Activated CD8-positive, alpha-beta T cell treated with anti-CD3 and anti-CD28 coated beads, Interleukin-2, amount 10 ng/mL, durations not matched to agents 7 days and 5 days (primary cell): ENCODE measurements at regions of chr2 and their contacts with region 1.

Region 1: DNA sequence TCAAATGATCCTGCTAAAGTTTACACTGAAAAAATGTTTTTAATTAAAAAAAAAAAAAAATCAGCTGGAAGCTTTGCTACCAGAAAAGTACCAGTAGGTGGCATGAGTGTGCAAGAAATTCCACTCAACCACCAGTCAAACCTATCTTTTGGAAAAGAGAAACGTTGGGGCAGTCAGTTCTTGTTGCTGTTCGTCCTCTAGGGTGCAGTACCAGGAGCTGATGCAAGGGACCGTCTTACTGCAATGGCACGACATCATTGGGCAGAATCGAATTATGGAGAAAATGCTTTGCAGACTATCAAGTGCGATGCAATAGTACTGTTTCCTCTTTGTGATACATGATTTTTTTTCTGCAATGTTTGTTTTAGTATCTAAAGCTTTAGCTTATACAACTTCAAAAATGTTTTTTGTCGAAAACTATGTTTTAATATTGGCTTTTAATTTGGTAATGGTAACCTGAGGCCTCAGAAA is 18.3 kb downstream of the YPEL5 start:
- DNase-seq: peak; percentile 84
- ATAC-seq: peak; percentile 79
- H3K4me3 Mint-ChIP-seq: no peak overlapping the region
- H3K27ac Mint-ChIP-seq: no peak overlapping the region
- H3K4me1 Mint-ChIP-seq: peaks cover 17% of the 10 kb centered on the region
- H3K27me3 Mint-ChIP-seq: peaks cover 3% of the 10 kb centered on the region

Region 2: DNA sequence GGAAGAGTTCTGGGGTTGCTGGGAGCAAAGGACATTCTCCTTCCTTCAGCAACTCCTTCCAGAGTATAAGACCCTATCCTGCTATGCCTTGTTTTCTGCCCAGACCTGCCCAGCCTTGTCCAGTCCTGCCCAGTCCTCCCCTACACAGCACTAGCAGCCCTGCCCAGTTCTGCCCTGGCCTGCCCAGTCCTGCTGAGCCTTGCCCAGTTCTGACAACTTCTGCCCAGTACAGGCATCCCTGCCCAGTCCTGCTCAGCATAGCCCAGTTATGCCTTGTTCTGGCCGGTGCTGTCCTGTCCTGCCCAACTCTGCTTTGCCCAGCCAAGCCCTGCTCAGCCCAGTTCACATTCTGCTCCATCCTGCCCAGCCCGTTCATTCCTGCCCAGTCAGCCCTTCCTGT is 198.8 kb before region 1 on chr2:
- CTCF ChIA-PET with region 1: no interaction called
- POLR2A ChIA-PET with region 1: no interaction called
- DNase-seq: no peak
- ATAC-seq: no peak
- H3K4me3 Mint-ChIP-seq: no peak overlapping the region
- H3K27ac Mint-ChIP-seq: no peak overlapping the region
- H3K4me1 Mint-ChIP-seq: no peaks in the 10 kb centered on the region
- H3K27me3 Mint-ChIP-seq: peaks cover 15% of the 10 kb centered on the region

Region 3: DNA sequence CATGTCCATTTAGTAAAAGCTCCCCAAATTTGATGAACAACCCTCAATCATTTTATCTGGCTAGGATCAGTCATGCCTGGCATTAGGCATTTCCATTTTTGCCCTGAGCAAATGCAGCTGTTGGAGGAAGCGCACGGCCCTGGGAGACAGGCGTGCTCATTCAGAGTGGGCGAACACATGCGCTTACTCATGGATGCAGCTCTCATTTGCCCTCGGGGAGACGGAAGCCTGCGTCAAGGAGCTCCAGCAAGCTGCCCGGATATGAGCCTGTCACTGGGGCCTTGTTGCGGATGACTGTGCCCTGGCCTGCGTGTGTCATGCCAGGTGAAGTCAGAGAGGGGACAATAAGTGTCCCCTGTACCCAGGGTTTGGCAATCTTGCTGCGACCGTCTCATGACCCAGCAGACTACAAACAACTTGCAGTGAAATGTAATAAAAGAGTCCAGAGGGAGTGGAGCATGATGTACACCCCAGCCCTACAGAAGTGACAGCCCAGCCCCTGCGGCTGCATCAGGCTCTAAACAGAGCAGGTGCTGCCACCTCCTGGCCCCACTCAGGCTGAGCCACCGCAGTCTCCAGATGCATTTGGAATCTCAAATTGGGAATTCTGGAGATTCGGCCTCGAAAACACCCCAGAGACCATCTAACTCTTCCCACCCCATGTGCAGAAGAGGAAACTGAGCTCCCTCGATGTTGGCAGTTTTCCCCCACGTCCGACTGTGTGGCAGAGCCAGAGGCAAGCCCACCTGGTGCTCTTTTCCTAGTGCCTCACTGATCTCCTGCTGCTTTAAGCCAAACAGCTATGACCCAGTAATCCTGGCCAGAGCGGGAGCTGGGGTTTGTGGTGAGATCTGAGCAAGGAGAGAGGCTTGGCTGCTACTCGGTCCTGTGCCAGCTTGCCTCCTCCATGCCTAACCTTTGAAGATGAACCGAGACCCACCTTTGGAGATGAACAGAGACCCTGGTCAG is 138.7 kb before region 1 on chr2:
- CTCF ChIA-PET with region 1: no interaction called
- POLR2A ChIA-PET with region 1: no interaction called
- DNase-seq: no peak
- ATAC-seq: no peak
- H3K4me3 Mint-ChIP-seq: no peak overlapping the region
- H3K27ac Mint-ChIP-seq: no peak overlapping the region
- H3K4me1 Mint-ChIP-seq: no peaks in the 10 kb centered on the region
- H3K27me3 Mint-ChIP-seq: peaks cover 7% of the 10 kb centered on the region

Region 4: DNA sequence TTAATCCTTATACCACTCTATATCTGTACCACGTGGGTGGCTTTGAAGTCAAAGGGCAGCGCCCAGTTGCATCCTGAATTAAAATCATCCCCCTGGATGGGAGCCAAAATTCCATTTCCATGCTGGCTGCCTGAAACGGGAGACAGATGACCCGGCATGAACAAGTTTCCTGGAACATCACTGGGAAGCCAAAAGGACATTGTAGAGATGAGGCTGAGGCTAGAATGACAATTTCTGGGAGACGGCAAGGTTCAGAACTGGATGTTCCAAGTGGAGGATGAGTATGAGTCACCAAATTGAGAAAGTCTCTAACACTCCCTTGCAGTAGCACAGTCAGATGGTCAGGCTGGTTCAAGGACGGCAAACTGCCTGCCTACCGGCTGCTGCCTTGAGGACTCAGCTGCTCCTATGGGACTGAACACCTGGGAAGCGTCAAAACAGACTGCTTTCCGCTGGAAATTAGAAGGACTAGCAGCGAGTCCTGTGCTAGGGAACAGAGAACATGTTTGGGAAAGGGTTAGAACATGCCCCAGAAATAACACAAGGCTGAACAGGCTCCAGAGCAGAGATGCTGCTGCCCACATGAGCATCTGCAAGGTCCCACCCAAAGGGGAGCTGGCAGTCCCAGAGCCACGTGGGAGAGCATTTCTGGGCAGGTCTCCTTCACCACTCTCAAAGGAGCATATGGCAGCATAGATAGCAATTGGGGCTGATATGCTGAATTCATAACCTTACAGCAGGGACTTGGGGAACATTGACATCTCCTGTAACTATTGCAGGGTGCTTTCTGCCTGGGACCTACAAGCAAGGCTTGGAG is 13.7 kb after region 1 on chr2:
- CTCF ChIA-PET with region 1: interaction called, 14 read pairs
- POLR2A ChIA-PET with region 1: no interaction called
- DNase-seq: no peak
- ATAC-seq: no peak
- H3K4me3 Mint-ChIP-seq: no peak overlapping the region
- H3K27ac Mint-ChIP-seq: no peak overlapping the region
- H3K4me1 Mint-ChIP-seq: peaks cover 2% of the 10 kb centered on the region
- H3K27me3 Mint-ChIP-seq: no peaks in the 10 kb centered on the region

Region 5: GRCh38 chr2:30225131-30225762 is 60.2 kb after region 1 on chr2:
- CTCF ChIA-PET with region 1: interaction called, 128 read pairs
- POLR2A ChIA-PET with region 1: no interaction called
- DNase-seq: peak; percentile 70
- ATAC-seq: peak; percentile 88
- H3K4me3 Mint-ChIP-seq: peak overlapping the region; percentile 97
- H3K27ac Mint-ChIP-seq: peak overlapping the region; percentile 99
- H3K4me1 Mint-ChIP-seq: peaks cover 68% of the 10 kb centered on the region
- H3K27me3 Mint-ChIP-seq: peaks cover 2% of the 10 kb centered on the region

Region 6: DNA sequence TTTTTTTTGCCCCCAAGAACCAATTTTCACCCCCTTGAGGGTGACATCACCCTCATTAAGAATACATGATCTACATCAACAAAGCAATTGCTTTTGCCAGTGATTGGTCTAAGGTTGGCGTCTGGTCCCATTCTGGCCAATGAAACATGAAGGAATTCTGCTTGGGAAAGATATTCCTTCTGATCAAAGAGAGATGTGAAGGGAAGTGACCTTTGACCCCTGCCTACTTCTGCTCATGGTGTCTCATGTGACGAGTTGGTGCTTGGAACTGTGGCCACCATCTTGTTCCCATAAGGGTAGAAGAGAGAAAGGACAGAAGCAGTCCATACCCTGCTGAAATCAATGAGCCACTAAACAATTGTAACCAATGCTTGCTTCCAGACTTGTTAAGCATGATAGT is 151.3 kb after region 1 on chr2:
- CTCF ChIA-PET with region 1: no interaction called
- POLR2A ChIA-PET with region 1: no interaction called
- DNase-seq: no peak
- ATAC-seq: no peak
- H3K4me3 Mint-ChIP-seq: no peak overlapping the region
- H3K27ac Mint-ChIP-seq: peak overlapping the region; percentile 17
- H3K4me1 Mint-ChIP-seq: peaks cover 36% of the 10 kb centered on the region
- H3K27me3 Mint-ChIP-seq: no peaks in the 10 kb centered on the region

Region 7: GRCh38 chr2:30447149-30448045 is 282.3 kb after region 1 on chr2 and contains the start of gene LCLAT1:
- CTCF ChIA-PET with region 1: interaction called, 10 read pairs
- POLR2A ChIA-PET with region 1: no interaction called
- DNase-seq: peak; percentile 86
- ATAC-seq: peak; percentile 95
- H3K4me3 Mint-ChIP-seq: peak within 1 kb of the TSS; percentile 93
- H3K27ac Mint-ChIP-seq: peak within 1 kb of the TSS; percentile 97
- H3K4me1 Mint-ChIP-seq: peaks cover 27% of the 10 kb centered on the region
- H3K27me3 Mint-ChIP-seq: no peaks in the 10 kb centered on the region
- total RNA-seq, gene LCLAT1: 25.1 to 25.3 TPM

Region 8: GRCh38 chr2:30662268-30663131 is 497.4 kb after region 1 on chr2:
- CTCF ChIA-PET with region 1: interaction called, 13 read pairs
- POLR2A ChIA-PET with region 1: no interaction called
- DNase-seq: peak; percentile 5
- ATAC-seq: no peak
- H3K4me3 Mint-ChIP-seq: no peak overlapping the region
- H3K27ac Mint-ChIP-seq: no peak overlapping the region
- H3K4me1 Mint-ChIP-seq: no peaks in the 10 kb centered on the region
- H3K27me3 Mint-ChIP-seq: no peaks in the 10 kb centered on the region